Posterior vena cava (tissue), 2 donors: ENCODE measurements at regions of chr10 and their contacts with region 1.

Region 1: GRCh38 chr10:84755311-84755710 is 426.9 kb downstream of the CCSER2 start:
- DNase-seq: no peak

Region 2: GRCh38 chr10:84700668-84701369 is 54.5 kb before region 1 on chr10:
- intact Hi-C with region 1: loop called in 1 of 2 experiments (anchors 2 kb)
- DNase-seq: no peak